Activated naive CD4-positive, alpha-beta T cell treated with anti-CD3 and anti-CD28 coated beads, Interleukin-2, amount 10 ng/mL, durations not matched to agents 7 days and 5 days (primary cell): ENCODE measurements at regions of chr10 and their contacts with region 1.

Region 1: GRCh38 chr10:35119378-35119777 is 7.3 kb upstream of the CREM start:
- DNase-seq: no peak
- H3K4me3 Mint-ChIP-seq: no peak overlapping the region
- H3K27ac Mint-ChIP-seq: no peak overlapping the region
- H3K4me1 Mint-ChIP-seq: peaks cover 6% of the 10 kb centered on the region
- H3K27me3 Mint-ChIP-seq: peaks cover 6% of the 10 kb centered on the region

Region 2: GRCh38 chr10:34994565-34995142 is 124.7 kb before region 1 on chr10:
- CTCF ChIA-PET with region 1: interaction called, 20 read pairs
- DNase-seq: peak; percentile 61
- H3K4me3 Mint-ChIP-seq: no peak overlapping the region
- H3K27ac Mint-ChIP-seq: no peak overlapping the region
- H3K4me1 Mint-ChIP-seq: peaks cover 9% of the 10 kb centered on the region
- H3K27me3 Mint-ChIP-seq: no peaks in the 10 kb centered on the region

Region 3: GRCh38 chr10:35130588-35131146 is 11.3 kb after region 1 on chr10:
- CTCF ChIA-PET with region 1: no interaction called
- DNase-seq: no peak
- H3K4me3 Mint-ChIP-seq: peak overlapping the region; percentile 19
- H3K27ac Mint-ChIP-seq: peak overlapping the region; percentile 84
- H3K4me1 Mint-ChIP-seq: peaks cover 71% of the 10 kb centered on the region
- H3K27me3 Mint-ChIP-seq: no peaks in the 10 kb centered on the region

Region 4: GRCh38 chr10:35218339-35218955 is 99.1 kb after region 1 on chr10:
- CTCF ChIA-PET with region 1: interaction called, 54 read pairs
- DNase-seq: peak; percentile 91
- H3K4me3 Mint-ChIP-seq: no peak overlapping the region
- H3K27ac Mint-ChIP-seq: peak overlapping the region; percentile 71
- H3K4me1 Mint-ChIP-seq: peaks cover 40% of the 10 kb centered on the region
- H3K27me3 Mint-ChIP-seq: peaks cover 6% of the 10 kb centered on the region

Region 5: DNA sequence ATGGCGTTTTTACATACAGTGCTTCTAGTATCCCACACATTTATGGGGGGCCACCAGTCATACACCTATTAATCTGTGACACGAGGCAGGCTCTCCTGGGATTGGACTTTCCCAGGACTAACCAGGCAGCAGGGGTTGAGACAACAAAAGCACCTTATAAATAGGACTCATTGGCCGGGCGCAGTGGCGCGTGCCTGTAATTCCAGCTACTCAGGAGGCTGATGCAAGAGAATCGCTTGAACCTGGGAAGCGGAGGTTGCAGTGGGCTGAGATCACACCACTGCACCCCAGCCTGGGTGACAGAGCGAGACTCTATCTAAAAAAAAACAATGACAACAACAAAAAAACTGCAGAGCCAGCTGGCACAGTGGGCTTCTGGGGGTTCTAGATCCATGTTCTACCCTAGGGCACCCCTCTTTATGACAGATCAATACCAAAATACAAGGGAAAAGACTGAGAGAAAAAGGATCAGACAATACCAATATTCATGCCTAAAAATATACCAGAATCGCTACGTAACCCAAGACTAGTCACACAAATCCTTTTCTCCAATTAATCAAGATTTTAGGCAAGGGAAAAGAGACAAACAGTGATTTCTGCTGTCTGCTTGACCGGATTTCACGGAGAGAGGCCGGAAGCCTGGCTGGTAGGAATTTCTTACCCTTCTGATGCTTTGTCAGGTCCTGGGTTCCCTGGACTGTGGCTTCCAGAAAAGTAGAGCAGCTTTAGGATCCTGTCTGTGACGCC is 118.6 kb after region 1 on chr10:
- CTCF ChIA-PET with region 1: interaction called, 11 read pairs
- DNase-seq: no peak
- H3K4me3 Mint-ChIP-seq: no peak overlapping the region
- H3K27ac Mint-ChIP-seq: no peak overlapping the region
- H3K4me1 Mint-ChIP-seq: no peaks in the 10 kb centered on the region
- H3K27me3 Mint-ChIP-seq: peaks cover 3% of the 10 kb centered on the region

Region 6: GRCh38 chr10:35635576-35635975 is 516.2 kb after region 1 on chr10:
- CTCF ChIA-PET with region 1: interaction called, 10 read pairs
- DNase-seq: peak; percentile 56
- H3K4me3 Mint-ChIP-seq: no peak overlapping the region
- H3K27ac Mint-ChIP-seq: no peak overlapping the region
- H3K4me1 Mint-ChIP-seq: peaks cover 8% of the 10 kb centered on the region
- H3K27me3 Mint-ChIP-seq: peaks cover 56% of the 10 kb centered on the region